Natural killer cell (primary cell): ENCODE measurements at regions of chr5 and their contacts with region 1.

Region 1: GRCh38 chr5:32613050-32613672 is 27.8 kb downstream of the SUB1 start:
- DNase-seq: peak; percentile 77 to 89
- ATAC-seq: peak; percentile 85 to 97 (median 89)
- H3K4me3 ChIP-seq: no peak overlapping the region
- H3K4me3 Mint-ChIP-seq: no peak overlapping the region
- H3K27ac ChIP-seq: no peak overlapping the region
- H3K27ac Mint-ChIP-seq: no peak overlapping the region
- H3K4me1 ChIP-seq: no peaks in the 10 kb centered on the region
- H3K4me1 Mint-ChIP-seq: peaks cover 11 to 19% of the 10 kb centered on the region in 2 donors
- H3K27me3 ChIP-seq: no peaks in the 10 kb centered on the region
- H3K27me3 Mint-ChIP-seq: no peaks in the 10 kb centered on the region
- CTCF ChIP-seq: peak; percentile 97

Region 2: GRCh38 chr5:32419791-32420190 is 193.4 kb before region 1 on chr5:
- intact Hi-C with region 1: loop called (anchors 10 kb)
- DNase-seq: no peak
- ATAC-seq: no peak
- H3K4me3 ChIP-seq: no peak overlapping the region
- H3K4me3 Mint-ChIP-seq: no peak overlapping the region
- H3K27ac ChIP-seq: no peak overlapping the region
- H3K27ac Mint-ChIP-seq: no peak overlapping the region
- H3K4me1 ChIP-seq: no peaks in the 10 kb centered on the region
- H3K4me1 Mint-ChIP-seq: peaks cover 43 to 56% of the 10 kb centered on the region in 2 donors
- H3K27me3 ChIP-seq: no peaks in the 10 kb centered on the region
- H3K27me3 Mint-ChIP-seq: no peaks in the 10 kb centered on the region
- CTCF ChIP-seq: no peak

Region 3: GRCh38 chr5:32489791-32490582 is 123.2 kb before region 1 on chr5:
- intact Hi-C with region 1: loop called (anchors 1 kb)
- DNase-seq: peak; percentile 48 to 86
- ATAC-seq: peak in 2 of 3 donors; percentile 54 to 62
- H3K4me3 ChIP-seq: no peak overlapping the region
- H3K4me3 Mint-ChIP-seq: no peak overlapping the region
- H3K27ac ChIP-seq: no peak overlapping the region
- H3K27ac Mint-ChIP-seq: no peak overlapping the region
- H3K4me1 ChIP-seq: no peaks in the 10 kb centered on the region
- H3K4me1 Mint-ChIP-seq: no peaks in the 10 kb centered on the region
- H3K27me3 ChIP-seq: no peaks in the 10 kb centered on the region
- H3K27me3 Mint-ChIP-seq: no peaks in the 10 kb centered on the region
- CTCF ChIP-seq: peak; percentile 73

Region 4: GRCh38 chr5:32531885-32532520 is 81.2 kb before region 1 on chr5:
- intact Hi-C with region 1: no loop called
- DNase-seq: peak in 1 of 2 donors; percentile 87
- ATAC-seq: peak in 2 of 3 donors; percentile 48 to 67
- H3K4me3 ChIP-seq: peak overlapping the region; percentile 5
- H3K4me3 Mint-ChIP-seq: peak overlapping the region; percentile 45
- H3K27ac ChIP-seq: peak overlapping the region; percentile 22
- H3K27ac Mint-ChIP-seq: no peak overlapping the region
- H3K4me1 ChIP-seq: peaks cover 10% of the 10 kb centered on the region
- H3K4me1 Mint-ChIP-seq: no peaks in the 10 kb centered on the region
- H3K27me3 ChIP-seq: no peaks in the 10 kb centered on the region
- H3K27me3 Mint-ChIP-seq: peaks cover 0 to 9% of the 10 kb centered on the region in 2 donors
- CTCF ChIP-seq: no peak

Region 5: GRCh38 chr5:32600057-32600622 is 13.0 kb before region 1 on chr5:
- intact Hi-C with region 1: no loop called
- DNase-seq: no peak
- ATAC-seq: no peak
- H3K4me3 ChIP-seq: no peak overlapping the region
- H3K4me3 Mint-ChIP-seq: no peak overlapping the region
- H3K27ac ChIP-seq: no peak overlapping the region
- H3K27ac Mint-ChIP-seq: peak overlapping the region; percentile 6 to 57
- H3K4me1 ChIP-seq: peaks cover 3% of the 10 kb centered on the region
- H3K4me1 Mint-ChIP-seq: peaks cover 50 to 62% of the 10 kb centered on the region in 2 donors
- H3K27me3 ChIP-seq: no peaks in the 10 kb centered on the region
- H3K27me3 Mint-ChIP-seq: no peaks in the 10 kb centered on the region
- CTCF ChIP-seq: no peak

Region 6: DNA sequence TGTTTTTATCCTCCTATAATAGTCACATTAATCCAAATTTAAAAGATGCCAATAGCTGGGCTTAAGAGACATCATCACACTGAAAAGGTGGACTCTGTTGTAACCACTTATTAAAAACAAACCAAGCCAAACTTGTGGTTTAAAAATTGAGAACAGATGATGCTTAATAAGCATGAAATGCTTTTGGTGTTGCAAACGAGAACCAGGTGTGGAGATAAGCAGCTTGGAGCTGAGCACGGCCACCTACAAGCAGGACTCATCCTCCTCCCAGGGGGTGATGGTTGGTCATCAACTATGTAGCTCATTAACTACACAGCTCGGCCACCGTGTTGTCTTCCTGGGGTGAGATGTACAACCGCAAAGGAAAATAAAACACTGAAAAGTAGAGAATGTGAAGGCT is 252.3 kb after region 1 on chr5:
- intact Hi-C with region 1: no loop called
- DNase-seq: no peak
- ATAC-seq: no peak
- H3K4me3 ChIP-seq: no peak overlapping the region
- H3K4me3 Mint-ChIP-seq: no peak overlapping the region
- H3K27ac ChIP-seq: no peak overlapping the region
- H3K27ac Mint-ChIP-seq: no peak overlapping the region
- H3K4me1 ChIP-seq: no peaks in the 10 kb centered on the region
- H3K4me1 Mint-ChIP-seq: peaks cover 9 to 10% of the 10 kb centered on the region in 2 donors
- H3K27me3 ChIP-seq: no peaks in the 10 kb centered on the region
- H3K27me3 Mint-ChIP-seq: peaks cover 16 to 23% of the 10 kb centered on the region in 2 donors
- CTCF ChIP-seq: no peak